Esophagus muscularis mucosa (tissue), 4 donors: ENCODE measurements at regions of chr3 and their contacts with region 1.

Region 1: GRCh38 chr3:15405448-15406050 is 21.8 kb downstream of the METTL6 start:
- DNase-seq: no peak
- H3K4me3 ChIP-seq: no peak overlapping the region
- H3K27ac ChIP-seq: no peak overlapping the region
- H3K4me1 ChIP-seq: peaks cover 0 to 3% (median 0%) of the 10 kb centered on the region in 4 donors
- H3K27me3 ChIP-seq: no peaks in the 10 kb centered on the region
- CTCF ChIP-seq: peak; percentile 43 to 61 (median 53)
- EP300 ChIP-seq: no peak
- POLR2A ChIP-seq: no peak

Region 2: DNA sequence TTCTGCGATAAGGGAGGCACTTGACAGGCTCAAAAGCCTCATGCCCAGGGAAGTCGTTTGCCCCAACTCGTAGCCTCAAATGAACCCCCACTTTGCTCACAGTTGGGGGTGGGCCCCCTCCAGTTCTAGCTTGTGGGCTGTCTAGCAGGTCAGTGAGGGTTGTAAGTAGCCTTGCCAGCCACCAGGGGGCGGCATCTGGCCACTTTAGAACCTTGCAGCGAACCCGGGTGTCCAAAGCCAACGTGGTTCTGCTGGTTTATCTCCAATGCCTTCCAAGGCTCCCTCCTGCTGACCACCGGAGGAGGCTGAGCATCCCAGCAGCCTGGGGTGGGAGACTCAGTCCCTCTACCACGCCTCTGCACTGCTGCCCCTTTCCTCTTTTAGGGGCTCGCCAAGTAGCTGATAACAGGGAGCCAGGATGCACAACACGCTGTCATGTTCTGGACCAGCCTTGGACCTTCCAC is 297.4 kb before region 1 on chr3:
- intact Hi-C with region 1: loop called (anchors 10 kb)
- DNase-seq: no peak
- H3K4me3 ChIP-seq: no peak overlapping the region
- H3K27ac ChIP-seq: no peak overlapping the region
- H3K4me1 ChIP-seq: peaks cover 9 to 13% (median 11%) of the 10 kb centered on the region in 4 donors
- H3K27me3 ChIP-seq: no peaks in the 10 kb centered on the region
- CTCF ChIP-seq: peak; percentile 80 to 92 (median 82)
- EP300 ChIP-seq: no peak
- POLR2A ChIP-seq: no peak

Region 3: DNA sequence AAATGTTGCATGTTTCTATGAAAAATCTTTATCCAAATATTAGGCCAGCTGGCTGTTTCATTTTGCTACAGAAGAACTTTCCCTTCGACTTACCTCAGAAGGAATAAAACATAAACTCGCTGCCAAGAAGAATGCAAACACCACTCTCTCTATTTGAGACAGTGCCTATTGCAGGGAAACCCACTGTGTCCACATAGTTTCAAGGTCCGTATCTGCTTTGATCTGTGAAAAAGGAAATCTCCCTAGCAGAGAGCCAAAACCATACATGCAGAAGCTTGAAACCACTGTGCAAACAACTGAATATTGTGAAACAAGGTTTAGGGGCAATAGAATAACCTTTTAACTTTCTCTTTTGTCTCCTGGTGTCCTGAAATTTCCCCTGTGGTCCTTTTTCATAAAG is 234.5 kb before region 1 on chr3:
- intact Hi-C with region 1: no loop called
- DNase-seq: no peak
- H3K4me3 ChIP-seq: no peak overlapping the region
- H3K27ac ChIP-seq: peak overlapping the region in 1 of 4 donors; percentile 5
- H3K4me1 ChIP-seq: peaks cover 0 to 12% (median 9%) of the 10 kb centered on the region in 4 donors
- H3K27me3 ChIP-seq: no peaks in the 10 kb centered on the region
- CTCF ChIP-seq: no peak
- EP300 ChIP-seq: no peak
- POLR2A ChIP-seq: no peak

Region 4: GRCh38 chr3:15443826-15444524 is 38.4 kb after region 1 on chr3:
- intact Hi-C with region 1: no loop called
- DNase-seq: no peak
- H3K4me3 ChIP-seq: no peak overlapping the region
- H3K27ac ChIP-seq: no peak overlapping the region
- H3K4me1 ChIP-seq: peaks cover 0 to 5% (median 0%) of the 10 kb centered on the region in 4 donors
- H3K27me3 ChIP-seq: no peaks in the 10 kb centered on the region
- CTCF ChIP-seq: no peak
- EP300 ChIP-seq: no peak
- POLR2A ChIP-seq: no peak